CD14-positive monocyte (primary cell): ENCODE measurements at regions of chr15 and their contacts with region 1.

Region 1: DNA sequence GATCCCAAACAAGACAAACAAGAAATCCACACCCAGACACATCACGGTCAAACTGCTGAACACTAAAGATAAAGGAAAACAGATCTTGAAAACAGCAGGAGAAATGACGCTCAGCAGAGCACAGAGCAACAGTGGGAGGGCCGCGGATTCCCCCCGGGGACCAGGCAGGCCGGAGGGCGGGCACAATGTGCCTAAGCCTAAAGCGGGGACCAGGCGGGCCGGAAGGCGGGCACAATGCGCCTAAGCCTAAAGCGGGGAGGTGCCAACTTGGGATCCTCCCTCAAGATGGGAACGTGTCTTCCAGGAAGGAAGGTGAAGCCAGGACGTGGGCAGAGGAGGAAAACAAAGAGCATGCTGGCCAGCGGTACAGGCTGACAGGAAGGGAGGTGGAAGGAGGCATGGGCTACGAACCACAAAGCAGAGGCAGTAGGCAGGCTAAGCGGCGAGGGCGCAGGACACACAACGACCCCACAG is 31.1 kb downstream of the CYFIP1 start:
- DNase-seq: no peak
- H3K4me3 ChIP-seq: peak overlapping the region in 1 of 3 experiments; percentile 28
- H3K4me3 Mint-ChIP-seq: peak overlapping the region; percentile 8 to 78
- H3K27ac ChIP-seq: no peak overlapping the region
- H3K27ac Mint-ChIP-seq: peak overlapping the region; percentile 10 to 78 (median 20)
- H3K4me1 ChIP-seq: peaks cover 6 to 14% of the 10 kb centered on the region in 2 donors
- H3K4me1 Mint-ChIP-seq: peaks cover 28% of the 10 kb centered on the region
- H3K27me3 ChIP-seq: no peaks in the 10 kb centered on the region
- H3K27me3 Mint-ChIP-seq: peaks cover 0 to 1% (median 1%) of the 10 kb centered on the region in 3 donors
- CTCF ChIP-seq: no peak

Region 2: DNA sequence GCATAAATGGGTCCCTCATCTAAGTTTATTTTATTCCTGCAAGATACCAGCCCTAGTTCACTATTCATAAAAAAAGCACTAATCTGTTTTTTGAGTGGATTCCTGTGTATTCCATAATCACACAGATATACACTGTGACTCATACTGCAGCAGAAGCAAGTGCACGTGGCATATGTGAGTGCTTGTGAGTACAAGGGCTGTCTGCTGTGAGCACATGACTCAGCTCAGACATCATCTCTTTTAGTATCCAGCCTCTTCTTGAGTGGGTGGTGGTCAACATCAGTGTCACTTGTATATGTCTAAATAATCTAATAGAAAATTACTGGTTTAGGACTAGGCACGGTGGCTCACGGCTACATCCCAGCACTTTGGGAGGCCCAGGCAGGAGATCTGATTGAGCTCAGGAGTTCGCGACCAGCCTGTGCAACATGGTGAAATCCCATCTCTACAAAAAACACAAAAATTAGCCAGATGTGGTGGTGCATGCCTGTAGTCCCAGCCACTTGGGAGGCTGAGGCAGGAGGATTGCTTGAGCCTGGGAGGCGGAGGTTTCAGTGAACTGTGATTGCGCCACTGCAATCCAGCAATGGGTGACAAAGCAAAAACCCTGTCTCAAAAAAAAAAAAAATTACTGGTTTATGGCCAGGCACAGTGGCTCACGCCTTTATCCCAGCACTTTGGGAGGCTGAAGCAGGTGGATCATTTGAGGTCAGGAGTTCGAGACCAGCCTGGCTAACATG is 60.8 kb before region 1 on chr15:
- intact Hi-C with region 1: loop called (anchors 10 kb)
- DNase-seq: no peak
- H3K4me3 ChIP-seq: no peak overlapping the region
- H3K4me3 Mint-ChIP-seq: no peak overlapping the region
- H3K27ac ChIP-seq: no peak overlapping the region
- H3K27ac Mint-ChIP-seq: no peak overlapping the region
- H3K4me1 ChIP-seq: no peaks in the 10 kb centered on the region
- H3K4me1 Mint-ChIP-seq: no peaks in the 10 kb centered on the region
- H3K27me3 ChIP-seq: no peaks in the 10 kb centered on the region
- H3K27me3 Mint-ChIP-seq: peaks cover 0 to 3% (median 0%) of the 10 kb centered on the region in 3 donors
- CTCF ChIP-seq: no peak

Region 3: GRCh38 chr15:23497710-23498111 is 548.6 kb after region 1 on chr15:
- intact Hi-C with region 1: no loop called
- DNase-seq: no peak
- H3K4me3 ChIP-seq: no peak overlapping the region
- H3K4me3 Mint-ChIP-seq: no peak overlapping the region
- H3K27ac ChIP-seq: no peak overlapping the region
- H3K27ac Mint-ChIP-seq: no peak overlapping the region
- H3K4me1 ChIP-seq: no peaks in the 10 kb centered on the region
- H3K4me1 Mint-ChIP-seq: no peaks in the 10 kb centered on the region
- H3K27me3 ChIP-seq: no peaks in the 10 kb centered on the region
- H3K27me3 Mint-ChIP-seq: peaks cover 0 to 4% (median 0%) of the 10 kb centered on the region in 3 donors
- CTCF ChIP-seq: no peak